Dendritic cell treated with granulocyte-macrophage colony-stimulating factor and Interleukin-4, amounts not matched to agents 40 ng/mL and 50 ng/mL, for 4 days (primary cell): ENCODE measurements at regions of chr11 and their contacts with region 1.

Region 1: GRCh38 chr11:1772270-1773130 is 8.8 kb upstream of the CTSD start:
- H3K4me3 Mint-ChIP-seq: peak overlapping the region; percentile 64
- H3K27ac Mint-ChIP-seq: peak overlapping the region; percentile 87
- H3K4me1 Mint-ChIP-seq: peaks cover 84% of the 10 kb centered on the region
- H3K27me3 Mint-ChIP-seq: peaks cover 12% of the 10 kb centered on the region

Region 2: GRCh38 chr11:1238767-1239595 is 533.5 kb before region 1 on chr11:
- intact Hi-C with region 1: no loop called
- H3K4me3 Mint-ChIP-seq: no peak overlapping the region
- H3K27ac Mint-ChIP-seq: no peak overlapping the region
- H3K4me1 Mint-ChIP-seq: no peaks in the 10 kb centered on the region
- H3K27me3 Mint-ChIP-seq: no peaks in the 10 kb centered on the region

Region 3: DNA sequence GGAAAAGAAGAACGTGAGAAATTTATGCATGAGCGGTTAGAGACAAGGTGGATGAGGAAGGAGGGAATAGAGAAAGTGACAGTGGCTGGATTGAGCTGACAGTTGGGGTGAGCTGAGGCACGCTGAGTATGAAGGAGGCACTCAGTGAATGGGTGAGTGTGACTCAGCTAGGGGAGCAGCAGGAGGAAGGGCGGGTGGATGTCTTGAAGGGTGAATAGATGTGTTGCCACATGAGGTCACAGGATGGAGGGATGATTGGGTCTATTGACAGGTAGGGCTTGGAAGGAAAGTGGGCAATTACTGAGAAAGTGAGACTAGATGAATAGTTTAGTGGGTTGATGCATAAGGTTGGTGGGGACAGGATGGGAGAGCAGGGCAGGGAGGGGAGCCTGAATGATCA is 30.1 kb before region 1 on chr11:
- intact Hi-C with region 1: no loop called
- H3K4me3 Mint-ChIP-seq: no peak overlapping the region
- H3K27ac Mint-ChIP-seq: no peak overlapping the region
- H3K4me1 Mint-ChIP-seq: peaks cover 23% of the 10 kb centered on the region
- H3K27me3 Mint-ChIP-seq: peaks cover 51% of the 10 kb centered on the region

Region 4: DNA sequence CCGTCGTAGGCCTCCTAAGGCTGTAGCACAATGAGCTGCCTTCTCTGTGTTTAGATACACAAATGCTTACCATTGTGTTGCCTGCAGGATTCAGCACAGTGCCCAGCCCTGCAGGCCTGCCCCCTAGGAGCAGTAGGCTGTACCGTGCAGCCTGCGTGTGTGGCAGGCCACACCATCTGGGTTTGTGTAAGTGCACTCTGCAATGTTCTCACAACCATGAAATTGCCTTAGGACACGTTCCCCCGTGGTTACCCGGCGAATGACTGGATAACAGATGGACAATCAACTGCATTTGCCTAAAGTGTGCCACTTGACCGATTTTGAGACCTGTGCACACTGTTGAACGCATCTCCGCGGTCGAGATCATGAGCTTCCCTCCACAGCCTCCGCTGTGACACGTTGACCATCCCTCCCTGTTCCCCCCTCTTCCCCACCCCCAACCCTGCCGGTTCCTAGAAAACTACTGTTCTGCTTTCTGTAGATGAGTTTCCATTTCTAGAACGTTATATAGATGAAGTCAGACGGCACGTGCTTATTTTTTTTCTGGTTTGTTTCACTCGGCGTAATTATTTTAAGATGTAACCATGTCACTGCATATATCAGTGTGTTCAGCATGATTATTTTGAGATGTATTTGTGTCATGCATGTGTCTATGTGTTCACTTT is 13.4 kb after region 1 on chr11:
- intact Hi-C with region 1: loop called (anchors 1 kb)
- H3K4me3 Mint-ChIP-seq: no peak overlapping the region
- H3K27ac Mint-ChIP-seq: peak overlapping the region; percentile 83
- H3K4me1 Mint-ChIP-seq: peaks cover 68% of the 10 kb centered on the region
- H3K27me3 Mint-ChIP-seq: peaks cover 25% of the 10 kb centered on the region